Left cardiac atrium (tissue), 4 donors: ENCODE measurements at regions of chr10 and their contacts with region 1.

Region 1: GRCh38 chr10:129030996-129031843 is 435.8 kb upstream of the MGMT start:
- DNase-seq: peak; percentile 58
- ATAC-seq: peak; percentile 93 to 96

Region 2: DNA sequence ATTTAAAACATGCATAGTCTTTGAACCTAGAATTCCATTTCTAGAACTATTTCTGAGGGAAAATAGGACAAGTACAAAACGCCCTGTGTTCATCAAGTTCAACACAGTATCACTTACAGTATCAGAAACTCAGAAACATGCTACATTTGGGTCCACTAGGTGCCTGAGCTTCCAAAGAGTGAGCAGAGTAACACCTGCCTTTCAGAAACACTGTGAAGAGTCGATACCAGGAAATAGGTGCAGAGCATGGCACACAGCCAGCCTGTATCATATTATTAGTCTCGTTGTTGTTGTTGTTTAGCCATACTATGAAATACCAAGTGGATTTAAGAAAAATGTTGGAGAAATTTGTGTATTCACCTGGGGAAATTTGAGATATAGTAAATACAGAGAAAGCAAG is 43.7 kb after region 1 on chr10:
- intact Hi-C with region 1: no loop called
- DNase-seq: no peak
- ATAC-seq: no peak

Region 3: GRCh38 chr10:129332476-129332875 is 301.3 kb after region 1 on chr10:
- intact Hi-C with region 1: loop called in 1 of 2 experiments (anchors 5 kb)
- DNase-seq: no peak
- ATAC-seq: no peak

Region 4: GRCh38 chr10:129971381-129972144 is 940.3 kb after region 1 on chr10:
- intact Hi-C with region 1: loop called (anchors 2 to 5 kb)
- DNase-seq: peak; percentile 69
- ATAC-seq: peak; percentile 91 to 92

Region 5: DNA sequence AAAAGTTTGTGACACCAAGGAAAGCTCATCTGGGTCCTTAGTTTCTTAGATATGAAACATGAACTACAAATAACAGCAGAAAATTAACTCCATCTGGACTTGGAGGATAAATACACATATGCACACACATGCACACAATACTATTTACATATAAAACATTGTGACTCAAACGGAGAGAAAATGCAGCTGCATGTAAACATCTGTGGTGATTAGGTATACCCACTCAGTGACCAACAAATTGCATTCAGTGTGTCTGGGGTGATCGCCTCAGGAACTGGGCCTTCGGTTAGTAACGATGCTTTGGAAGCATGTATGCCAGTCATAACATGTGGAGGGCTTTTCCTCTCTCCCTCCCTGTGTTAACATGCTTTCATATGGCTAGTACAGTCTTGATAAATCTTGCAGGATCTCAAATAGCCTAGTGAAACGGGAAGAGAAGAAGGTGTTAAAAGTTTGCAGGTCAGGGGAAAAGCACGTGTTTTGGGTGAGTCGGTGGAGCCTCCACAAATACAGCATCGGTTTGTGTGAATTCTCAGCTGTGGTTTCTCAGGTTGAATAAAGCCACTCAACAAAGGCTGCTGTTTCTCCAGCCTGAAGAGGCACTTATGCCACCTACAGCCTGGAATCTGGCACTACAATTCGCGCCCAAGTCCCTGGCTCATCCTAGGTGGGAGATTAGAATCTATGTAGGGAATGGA is 1096.3 kb after region 1 on chr10:
- intact Hi-C with region 1: loop called in 1 of 2 experiments (anchors 10 kb)
- DNase-seq: peak; percentile 51
- ATAC-seq: peak; percentile 80 to 91